ENCODE measurements at regions of chr11 and their contacts with region 1.

Region 1: GRCh38 chr11:94897330-94897768 is 76.0 kb downstream of the CWC15 start:
- DNase-seq: peak in 8 of 10 donors; percentile 23 to 77 (median 52)
- H3K4me3 ChIP-seq: no peak overlapping the region
- H3K27ac ChIP-seq: no peak overlapping the region
- H3K27me3 ChIP-seq: no peaks in the 10 kb centered on the region
- CTCF ChIP-seq: peak; percentile 69 to 96 (median 89)

Region 2: DNA sequence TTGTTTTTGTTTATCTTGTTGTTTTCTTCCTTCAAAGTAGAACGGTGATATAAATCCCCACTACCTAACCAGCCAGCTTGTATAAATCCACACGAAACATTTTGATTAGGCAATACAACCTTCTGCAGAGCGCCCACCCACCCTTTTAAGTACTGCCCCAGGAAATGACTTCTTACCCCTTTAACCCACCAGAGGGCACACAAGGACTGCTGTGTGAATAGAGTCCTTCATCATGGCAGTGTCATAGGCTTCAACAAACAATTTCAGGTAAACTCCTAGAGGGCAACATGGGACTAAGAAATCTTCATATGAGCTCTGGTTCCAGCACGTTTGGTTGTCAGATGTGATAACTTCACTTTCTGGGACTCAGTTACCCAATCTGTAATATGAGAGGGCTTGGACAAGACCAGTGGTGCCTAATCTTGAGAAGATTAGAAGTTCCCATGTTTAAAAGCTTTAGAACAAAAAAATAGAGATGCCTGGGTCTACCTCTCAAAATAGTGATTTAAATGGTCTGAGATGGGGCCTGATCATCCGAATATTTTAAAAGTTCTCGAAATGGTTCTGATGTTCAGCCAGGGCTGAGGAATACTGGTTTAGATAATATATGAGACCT is 274.1 kb before region 1 on chr11:
- intact Hi-C with region 1: loop called (anchors 5 to 10 kb)
- DNase-seq: peak in 2 of 10 donors; percentile 41 to 42
- H3K4me3 ChIP-seq: no peak overlapping the region
- H3K27ac ChIP-seq: no peak overlapping the region
- H3K27me3 ChIP-seq: no peaks in the 10 kb centered on the region
- CTCF ChIP-seq: peak; percentile 41 to 87 (median 70)

Region 3: GRCh38 chr11:94786264-94787126 is 110.9 kb before region 1 on chr11:
- intact Hi-C with region 1: loop called in 1 of 2 experiments (anchors 10 kb)
- DNase-seq: no peak
- H3K4me3 ChIP-seq: no peak overlapping the region
- H3K27ac ChIP-seq: no peak overlapping the region
- H3K27me3 ChIP-seq: no peaks in the 10 kb centered on the region
- CTCF ChIP-seq: peak in 55 of 56 donors; percentile 41 to 76 (median 63)

Region 4: DNA sequence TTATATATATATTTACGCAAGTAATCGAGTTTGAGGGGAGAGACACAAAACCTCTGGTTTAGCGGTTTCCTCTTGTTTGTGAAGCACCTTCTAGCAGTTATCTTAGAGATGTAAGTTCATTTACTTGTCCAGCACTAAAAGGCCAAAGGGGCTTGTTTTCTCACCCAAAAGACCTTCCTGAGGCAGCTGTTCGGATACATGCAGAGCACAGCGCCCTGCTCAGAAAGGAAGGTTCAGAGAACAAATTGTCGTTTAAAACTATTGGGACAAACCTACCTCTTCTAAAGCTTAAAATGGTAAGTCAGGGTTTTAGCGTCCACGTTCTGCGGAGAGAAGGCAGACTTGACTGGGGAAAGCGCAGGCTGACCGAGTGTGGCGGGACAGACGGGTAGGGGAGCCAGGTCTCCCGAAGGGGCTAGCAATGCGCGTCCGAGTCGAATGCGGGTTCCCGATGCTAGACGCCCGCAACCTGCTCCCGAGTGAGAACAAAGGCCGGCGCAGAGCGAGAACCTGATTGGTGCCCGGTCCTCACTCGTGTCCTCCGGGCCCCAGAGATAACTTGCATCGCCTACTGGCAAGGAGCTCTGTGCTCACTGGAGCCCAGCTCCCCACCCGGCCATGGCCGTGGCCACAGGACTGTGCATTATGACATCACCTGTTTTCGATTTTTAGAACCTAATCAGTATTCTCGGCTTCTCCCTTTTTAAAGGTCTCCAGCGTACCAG is 334.7 kb after region 1 on chr11:
- intact Hi-C with region 1: no loop called
- DNase-seq: peak; percentile 59 to 89 (median 80)
- H3K4me3 ChIP-seq: peak overlapping the region; percentile 65 to 96 (median 87)
- H3K27ac ChIP-seq: peak overlapping the region; percentile 59 to 99 (median 95)
- H3K27me3 ChIP-seq: no peaks in the 10 kb centered on the region
- CTCF ChIP-seq: peak in 3 of 56 donors; percentile 4 to 16 (median 8)

Measured in dorsolateral prefrontal cortex (tissue), 120 donors.